Brain microvascular endothelial cell (primary cell): ENCODE measurements at regions of chr11 and their contacts with region 1.

Region 1: GRCh38 chr11:64134963-64135362 is 30.9 kb downstream of the MACROD1 start:
- DNase-seq: no peak
- H3K4me3 ChIP-seq: no peak overlapping the region
- H3K27ac ChIP-seq: no peak overlapping the region
- H3K27me3 ChIP-seq: peaks cover 16% of the 10 kb centered on the region
- CTCF ChIP-seq: no peak

Region 2: GRCh38 chr11:64000026-64000739 is 134.8 kb before region 1 on chr11:
- in situ Hi-C with region 1: loop called (anchors 5 kb)
- DNase-seq: peak; percentile 33
- H3K4me3 ChIP-seq: no peak overlapping the region
- H3K27ac ChIP-seq: no peak overlapping the region
- H3K27me3 ChIP-seq: no peaks in the 10 kb centered on the region
- CTCF ChIP-seq: peak; percentile 57

Region 3: DNA sequence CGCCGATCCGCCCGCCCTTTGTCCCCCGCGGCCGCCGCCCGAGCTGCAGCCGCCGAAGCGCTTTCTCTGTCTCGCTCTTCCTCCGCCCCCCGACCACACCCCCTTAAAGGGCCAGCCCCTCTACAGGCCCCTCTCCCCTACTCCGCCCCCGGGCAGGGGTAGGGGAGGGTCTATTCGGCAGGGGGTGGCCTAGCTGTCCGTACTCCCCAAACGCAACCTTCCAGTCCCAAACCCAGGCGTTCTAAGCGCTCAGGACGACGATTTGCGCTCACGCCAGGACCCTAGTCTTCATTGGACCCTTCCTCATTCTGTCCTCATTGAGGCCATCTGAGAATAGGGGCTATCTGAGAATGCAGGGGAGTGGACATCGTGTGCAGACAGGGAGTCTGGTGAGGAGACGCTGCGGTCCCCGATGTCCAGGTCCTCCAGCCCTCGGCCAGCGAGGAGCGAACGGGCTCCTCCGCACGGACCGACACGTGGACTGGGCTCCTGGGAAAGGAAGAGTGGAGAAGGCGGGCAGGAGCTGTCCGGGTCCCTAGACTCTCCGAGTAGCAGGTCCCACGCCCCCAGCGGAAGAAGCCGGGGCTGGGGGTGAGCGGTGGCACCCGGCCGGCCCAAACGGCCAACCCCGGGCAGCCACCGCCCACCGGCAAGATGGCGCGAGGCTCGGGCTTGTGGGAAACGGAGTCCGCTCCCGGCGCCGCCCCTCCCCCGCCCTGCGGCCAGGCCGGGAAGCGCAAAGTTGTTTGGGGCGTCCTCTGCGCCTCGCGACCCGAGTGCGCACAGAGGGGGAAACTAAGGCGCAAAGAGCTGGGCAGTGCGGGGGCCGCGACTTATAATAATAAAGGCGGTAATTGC is 112.1 kb after region 1 on chr11 and contains the start of gene PPP1R14B:
- in situ Hi-C with region 1: no loop called
- DNase-seq: peak; percentile 74
- H3K4me3 ChIP-seq: peak within 1 kb of the TSS; percentile 97
- H3K27ac ChIP-seq: peak within 1 kb of the TSS; percentile 73
- H3K27me3 ChIP-seq: no peaks in the 10 kb centered on the region
- CTCF ChIP-seq: no peak